ENCODE measurements at regions of chr19 and their contacts with region 1.

Region 1: GRCh38 chr19:12777217-12778016 is 2.1 kb upstream of the HOOK2 start:
- DNase-seq: peak; percentile 85
- ATAC-seq: peak; percentile 32
- H3K4me3 Mint-ChIP-seq: peak overlapping the region; percentile 85
- H3K27ac Mint-ChIP-seq: peak overlapping the region; percentile 92
- H3K4me1 Mint-ChIP-seq: peaks cover 45% of the 10 kb centered on the region
- H3K27me3 Mint-ChIP-seq: no peaks in the 10 kb centered on the region
- CTCF ChIP-seq: peak; percentile 99

Region 2: GRCh38 chr19:12656899-12657571 is 120.4 kb before region 1 on chr19:
- CTCF ChIA-PET with region 1: no interaction called
- POLR2A ChIA-PET with region 1: no interaction called
- intact Hi-C with region 1: no loop called
- DNase-seq: peak; percentile 69
- ATAC-seq: peak; percentile 86
- H3K4me3 Mint-ChIP-seq: no peak overlapping the region
- H3K27ac Mint-ChIP-seq: no peak overlapping the region
- H3K4me1 Mint-ChIP-seq: no peaks in the 10 kb centered on the region
- H3K27me3 Mint-ChIP-seq: no peaks in the 10 kb centered on the region
- CTCF ChIP-seq: no peak

Region 3: DNA sequence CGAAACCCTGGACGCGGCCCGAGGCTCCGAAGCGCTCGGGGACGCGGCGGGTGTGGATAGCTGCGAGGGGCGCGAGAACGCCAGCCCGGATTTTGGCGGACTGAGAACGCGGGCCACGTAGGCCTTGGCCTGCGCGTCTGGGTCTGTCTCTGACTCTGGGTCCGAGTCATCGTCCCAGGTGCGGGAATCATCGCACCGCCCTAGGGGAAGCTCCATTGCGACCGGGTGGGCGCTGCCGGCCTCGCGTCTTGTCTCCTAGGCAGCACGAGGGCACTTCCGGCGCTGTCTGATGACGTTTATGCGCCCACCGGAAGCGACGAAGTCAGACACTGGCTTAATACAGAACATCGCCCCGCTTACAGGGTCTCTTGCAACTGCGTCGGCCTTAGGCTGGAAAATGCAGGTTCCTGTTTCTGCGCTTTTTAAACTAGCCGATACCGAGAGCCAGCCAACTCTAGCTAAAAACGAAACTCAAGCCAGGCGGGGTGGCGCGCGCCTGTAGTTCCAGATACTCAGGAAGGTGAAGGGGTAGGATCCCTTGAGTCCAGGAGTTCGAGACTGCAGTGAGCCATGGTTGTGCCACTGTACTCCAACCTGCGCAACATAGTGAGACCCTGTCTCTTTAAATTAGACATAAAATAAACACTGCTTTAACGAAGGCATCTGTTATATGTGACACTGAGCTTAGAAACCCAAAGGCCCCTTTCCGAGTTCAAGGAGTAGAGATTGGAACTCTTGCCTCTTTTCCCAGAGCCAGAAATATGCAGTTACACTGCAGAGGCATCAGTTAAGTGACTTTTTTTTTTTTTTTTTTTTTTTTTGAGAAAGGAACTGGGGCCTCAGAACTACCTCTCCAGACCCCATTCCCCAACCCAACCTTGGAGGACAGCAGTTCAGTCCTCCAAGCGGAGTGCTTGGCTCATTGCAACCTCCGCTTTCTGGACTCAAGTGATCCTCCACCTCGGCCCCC is 80.8 kb before region 1 on chr19 and contains the start of gene FBXW9:
- CTCF ChIA-PET with region 1: no interaction called
- POLR2A ChIA-PET with region 1: no interaction called
- intact Hi-C with region 1: no loop called
- DNase-seq: peak; percentile 99
- ATAC-seq: peak; percentile 92
- H3K4me3 Mint-ChIP-seq: peak within 1 kb of the TSS; percentile 79
- H3K27ac Mint-ChIP-seq: peak within 1 kb of the TSS; percentile 96
- H3K4me1 Mint-ChIP-seq: peaks cover 13% of the 10 kb centered on the region
- H3K27me3 Mint-ChIP-seq: no peaks in the 10 kb centered on the region
- CTCF ChIP-seq: no peak
- total RNA-seq, gene FBXW9: 9.9 to 10.8 TPM

Region 4: DNA sequence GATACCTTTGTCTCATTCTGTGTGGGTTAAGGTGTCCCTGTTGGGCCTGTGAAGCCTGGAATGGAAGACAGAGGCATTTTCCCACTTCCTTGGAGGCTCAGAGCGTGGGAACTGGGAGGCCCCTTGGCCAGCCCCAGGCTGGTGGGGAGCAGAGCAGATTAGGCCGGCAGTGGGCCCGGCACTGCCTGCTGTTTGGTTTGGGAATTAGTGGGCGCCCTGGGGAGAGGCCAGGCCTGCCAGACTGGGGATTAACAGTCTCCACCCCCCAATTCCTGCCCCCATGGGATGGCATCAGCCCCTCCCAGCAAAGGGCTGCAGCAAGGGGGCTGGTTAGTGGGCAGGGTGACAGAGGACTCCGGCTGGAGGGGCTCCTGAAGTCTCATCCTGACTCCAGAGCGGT is 28.9 kb before region 1 on chr19:
- CTCF ChIA-PET with region 1: no interaction called
- POLR2A ChIA-PET with region 1: no interaction called
- intact Hi-C with region 1: no loop called
- DNase-seq: no peak
- ATAC-seq: no peak
- H3K4me3 Mint-ChIP-seq: no peak overlapping the region
- H3K27ac Mint-ChIP-seq: no peak overlapping the region
- H3K4me1 Mint-ChIP-seq: no peaks in the 10 kb centered on the region
- H3K27me3 Mint-ChIP-seq: peaks cover 22% of the 10 kb centered on the region
- CTCF ChIP-seq: no peak

Region 5: DNA sequence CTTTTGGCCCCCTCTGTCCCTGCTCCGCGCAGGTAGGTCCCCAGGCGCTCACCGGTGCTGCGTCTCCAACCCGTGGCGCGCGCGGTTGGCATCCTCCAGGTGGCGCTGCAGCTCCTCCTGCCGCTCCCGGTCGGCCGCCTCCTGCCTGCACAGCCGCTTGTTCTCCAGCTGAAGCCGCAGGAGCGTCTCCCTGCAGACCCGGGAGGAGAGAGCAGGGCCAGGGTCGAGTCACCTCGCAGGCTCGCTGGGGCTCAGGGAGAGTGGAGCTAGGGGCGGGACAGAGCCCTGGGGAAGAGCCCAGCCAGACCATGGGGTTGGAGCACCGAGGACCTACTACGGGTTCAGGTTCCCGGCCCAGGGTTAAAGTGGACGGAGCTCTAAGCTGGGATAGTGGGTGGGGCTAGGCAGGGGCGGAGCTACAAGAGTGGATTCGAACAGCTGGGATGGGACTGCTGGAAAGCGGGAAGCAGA is 11.3 kb before region 1 on chr19:
- CTCF ChIA-PET with region 1: interaction called, 62 read pairs
- POLR2A ChIA-PET with region 1: interaction called, 5 read pairs
- intact Hi-C with region 1: no loop called
- DNase-seq: peak; percentile 81
- ATAC-seq: peak; percentile 61
- H3K4me3 Mint-ChIP-seq: no peak overlapping the region
- H3K27ac Mint-ChIP-seq: no peak overlapping the region
- H3K4me1 Mint-ChIP-seq: peaks cover 3% of the 10 kb centered on the region
- H3K27me3 Mint-ChIP-seq: no peaks in the 10 kb centered on the region
- CTCF ChIP-seq: peak; percentile 69

Region 6: GRCh38 chr19:12806239-12807081 is 29.0 kb after region 1 on chr19 and contains the start of gene RNASEH2A:
- CTCF ChIA-PET with region 1: interaction called, 326 read pairs
- POLR2A ChIA-PET with region 1: interaction called, 10 read pairs
- intact Hi-C with region 1: no loop called
- DNase-seq: peak; percentile 93
- ATAC-seq: peak; percentile 91
- H3K4me3 Mint-ChIP-seq: peak within 1 kb of the TSS; percentile 86
- H3K27ac Mint-ChIP-seq: peak within 1 kb of the TSS; percentile 89
- H3K4me1 Mint-ChIP-seq: peaks cover 18% of the 10 kb centered on the region
- H3K27me3 Mint-ChIP-seq: peaks cover 2% of the 10 kb centered on the region
- CTCF ChIP-seq: no peak
- total RNA-seq, gene RNASEH2A: 40.3 to 44.1 TPM

Region 7: GRCh38 chr19:12858041-12858928 is 80.9 kb after region 1 on chr19:
- CTCF ChIA-PET with region 1: no interaction called
- POLR2A ChIA-PET with region 1: no interaction called
- intact Hi-C with region 1: no loop called
- DNase-seq: no peak
- ATAC-seq: no peak
- H3K4me3 Mint-ChIP-seq: no peak overlapping the region
- H3K27ac Mint-ChIP-seq: no peak overlapping the region
- H3K4me1 Mint-ChIP-seq: no peaks in the 10 kb centered on the region
- H3K27me3 Mint-ChIP-seq: no peaks in the 10 kb centered on the region
- CTCF ChIP-seq: no peak